Heart left ventricle (tissue), 16 donors: ENCODE measurements at regions of chr7 and their contacts with region 1.

Region 1: GRCh38 chr7:36389371-36390198 is at the start of gene ANLN:
- DNase-seq: peak; percentile 91 to 96 (median 93)
- ATAC-seq: peak; percentile 95 to 99 (median 99)
- H3K4me3 ChIP-seq: peak within 1 kb of the TSS; percentile 38 to 81 (median 67)
- H3K27ac ChIP-seq: peak within 1 kb of the TSS in 11 of 12 donors; percentile 15 to 81 (median 57)
- H3K4me1 ChIP-seq: peaks cover 0 to 30% (median 14%) of the 10 kb centered on the region in 12 donors
- H3K27me3 ChIP-seq: no peaks in the 10 kb centered on the region
- CTCF ChIP-seq: no peak
- POLR2A ChIP-seq: peak in 1 of 2 donors; percentile 44
- total RNA-seq, gene ANLN: 0.83 to 30.7 (median 1.5) TPM

Region 2: DNA sequence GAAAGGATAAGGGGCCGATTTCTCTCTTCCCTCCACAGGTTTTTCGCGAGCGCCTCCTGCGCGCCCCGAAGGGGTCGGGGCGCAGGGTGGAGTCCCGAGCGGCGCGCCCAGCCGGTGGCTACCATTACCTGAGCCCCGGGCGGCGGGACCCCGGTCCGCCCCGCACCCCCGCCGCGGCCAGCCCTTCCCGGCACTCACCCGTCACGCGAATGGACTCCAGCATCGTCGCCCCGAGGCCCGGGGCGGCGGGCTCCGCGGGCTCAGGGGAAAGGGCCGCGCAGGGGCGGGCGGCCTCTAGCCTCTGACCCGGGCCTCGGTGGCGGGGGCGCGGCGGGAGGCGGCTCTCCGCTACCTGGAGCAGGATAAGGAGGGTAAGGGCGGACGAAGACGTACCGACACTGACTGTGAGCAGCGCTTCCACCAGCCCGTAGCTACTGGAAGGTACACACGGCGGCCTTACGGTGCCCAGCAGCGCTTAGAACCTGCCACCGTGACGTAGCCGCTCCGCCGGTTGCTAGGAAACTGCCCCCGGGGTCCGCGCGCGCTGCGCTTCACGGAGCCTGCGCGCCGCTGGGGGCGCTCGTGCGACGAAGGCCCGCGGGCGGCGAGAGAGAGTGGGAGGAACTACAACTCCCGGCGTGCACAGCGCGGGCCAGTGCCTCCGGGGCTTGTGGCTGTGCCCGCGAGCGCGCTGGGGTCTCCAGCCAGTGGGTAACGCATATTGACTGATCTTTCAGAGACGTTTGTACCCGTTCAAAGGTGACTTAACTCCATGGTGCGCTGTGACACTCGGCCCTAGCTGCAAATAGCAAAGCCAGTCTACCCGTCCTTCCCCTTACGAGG is 22.6 kb before region 1 on chr7:
- intact Hi-C with region 1: loop called in 1 of 10 experiments (anchors 2 kb)
- DNase-seq: peak; percentile 85 to 94 (median 88)
- ATAC-seq: peak; percentile 94 to 100 (median 99)
- H3K4me3 ChIP-seq: peak overlapping the region; percentile 48 to 86 (median 78)
- H3K27ac ChIP-seq: peak overlapping the region in 4 of 12 donors; percentile 35 to 81 (median 42)
- H3K4me1 ChIP-seq: peaks cover 0 to 14% (median 2%) of the 10 kb centered on the region in 12 donors
- H3K27me3 ChIP-seq: peaks cover 0 to 8% (median 0%) of the 10 kb centered on the region in 9 donors
- CTCF ChIP-seq: peak; percentile 79 to 99 (median 93)
- POLR2A ChIP-seq: peak in 1 of 2 donors; percentile 54